ENCODE measurements at regions of chr10 and their contacts with region 1.

Region 1: GRCh38 chr10:61903221-61903927 is 1.9 kb downstream of the ARID5B start:
- DNase-seq: peak; percentile 38
- ATAC-seq: peak; percentile 89
- H3K4me3 ChIP-seq: peak overlapping the region; percentile 93 to 96 (median 94)
- H3K27ac ChIP-seq: peak overlapping the region; percentile 94
- H3K4me1 ChIP-seq: peaks cover 51% of the 10 kb centered on the region
- H3K27me3 ChIP-seq: no peaks in the 10 kb centered on the region; a peak in 1 of 5 replicates
- CTCF ChIP-seq: peak; percentile 36; the same call in 1 of the 2 replicates
- EP300 ChIP-seq: no peak
- POLR2A ChIP-seq: peak; percentile 39 to 47; a peak in 2 of 4 replicates
- RAD21 ChIP-seq: peak; percentile 45; the same call in 1 of the 2 replicates

Region 2: DNA sequence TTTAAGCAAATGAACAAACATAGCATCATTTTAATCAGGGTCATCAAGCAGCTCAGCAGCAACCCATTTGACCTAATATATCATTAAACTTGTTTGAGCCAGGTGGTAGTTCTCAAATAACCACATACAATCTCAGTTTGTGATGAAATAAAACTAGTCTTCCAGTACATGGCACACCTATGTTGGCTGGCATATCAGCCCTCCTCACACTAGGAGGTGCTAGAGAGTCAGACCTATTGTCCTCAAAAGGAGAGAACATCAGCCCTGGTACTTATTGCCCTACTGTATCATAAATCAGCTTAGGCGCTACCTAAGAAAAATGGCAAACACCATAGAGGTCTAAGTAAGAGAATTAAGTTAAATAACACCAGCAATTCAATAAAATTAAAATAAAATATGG is 158.9 kb before region 1 on chr10:
- CTCF ChIA-PET with region 1: no interaction called
- POLR2A ChIA-PET with region 1: no interaction called
- in situ Hi-C with region 1: no loop called
- intact Hi-C with region 1: no loop called
- DNase-seq: no peak
- ATAC-seq: no peak
- H3K4me3 ChIP-seq: no peak overlapping the region
- H3K27ac ChIP-seq: no peak overlapping the region
- H3K4me1 ChIP-seq: peaks cover 14% of the 10 kb centered on the region
- H3K27me3 ChIP-seq: no peaks in the 10 kb centered on the region
- CTCF ChIP-seq: peak; percentile 34; the same call in 1 of the 2 replicates
- EP300 ChIP-seq: no peak
- POLR2A ChIP-seq: no peak
- RAD21 ChIP-seq: no peak

Region 3: GRCh38 chr10:61835069-61835945 is 68.1 kb before region 1 on chr10:
- CTCF ChIA-PET with region 1: no interaction called
- POLR2A ChIA-PET with region 1: interaction called, 5 read pairs
- in situ Hi-C with region 1: no loop called
- intact Hi-C with region 1: loop called (anchors 2 kb)
- DNase-seq: peak; percentile 44
- ATAC-seq: peak; percentile 39; the same call in 1 of the 3 replicates
- H3K4me3 ChIP-seq: no peak overlapping the region
- H3K27ac ChIP-seq: no peak overlapping the region
- H3K4me1 ChIP-seq: peaks cover 66% of the 10 kb centered on the region
- H3K27me3 ChIP-seq: no peaks in the 10 kb centered on the region; a peak in 1 of 5 replicates
- CTCF ChIP-seq: peak; percentile 61
- EP300 ChIP-seq: no peak
- POLR2A ChIP-seq: no peak
- RAD21 ChIP-seq: peak; percentile 58

Region 4: DNA sequence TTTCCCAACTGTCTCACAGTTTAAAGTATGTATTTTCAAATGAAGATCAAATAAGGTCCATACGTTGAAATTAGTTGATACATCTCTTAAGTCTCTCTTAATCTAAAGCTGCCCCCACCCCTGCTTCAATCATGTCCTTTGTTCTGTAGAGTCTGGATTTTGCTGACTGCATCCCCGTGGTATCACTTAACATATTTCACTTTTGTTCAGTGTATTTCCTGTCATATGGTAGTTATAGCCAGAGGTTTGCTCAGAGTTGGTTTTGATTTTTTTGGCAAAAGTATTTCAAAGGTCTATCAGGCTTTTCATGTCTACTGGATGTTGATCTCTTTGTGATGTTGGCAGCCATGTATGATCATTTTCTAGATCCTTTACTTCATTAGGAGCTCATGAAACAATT is 56.3 kb before region 1 on chr10:
- CTCF ChIA-PET with region 1: no interaction called
- POLR2A ChIA-PET with region 1: no interaction called
- in situ Hi-C with region 1: no loop called
- intact Hi-C with region 1: no loop called
- DNase-seq: no peak
- ATAC-seq: no peak
- H3K4me3 ChIP-seq: no peak overlapping the region
- H3K27ac ChIP-seq: no peak overlapping the region
- H3K4me1 ChIP-seq: no peaks in the 10 kb centered on the region
- H3K27me3 ChIP-seq: no peaks in the 10 kb centered on the region; a peak in 1 of 5 replicates
- CTCF ChIP-seq: no peak
- EP300 ChIP-seq: no peak
- POLR2A ChIP-seq: no peak
- RAD21 ChIP-seq: no peak

Region 5: GRCh38 chr10:62250594-62251198 is 347.3 kb after region 1 on chr10:
- CTCF ChIA-PET with region 1: no interaction called
- POLR2A ChIA-PET with region 1: no interaction called
- in situ Hi-C with region 1: loop called (anchors 10 kb)
- intact Hi-C with region 1: no loop called
- DNase-seq: peak; percentile 74
- ATAC-seq: peak; percentile 84
- H3K4me3 ChIP-seq: no peak overlapping the region
- H3K27ac ChIP-seq: no peak overlapping the region
- H3K4me1 ChIP-seq: peaks cover 12% of the 10 kb centered on the region
- H3K27me3 ChIP-seq: no peaks in the 10 kb centered on the region
- CTCF ChIP-seq: no peak
- EP300 ChIP-seq: no peak
- POLR2A ChIP-seq: no peak
- RAD21 ChIP-seq: no peak

Measured in HepG2 (cell line).